ENCODE measurements at regions of chr6 and their contacts with region 1.

Region 1: GRCh38 chr6:16514249-16514648 is 247.0 kb downstream of the ATXN1 start:
- DNase-seq: no peak

Region 2: DNA sequence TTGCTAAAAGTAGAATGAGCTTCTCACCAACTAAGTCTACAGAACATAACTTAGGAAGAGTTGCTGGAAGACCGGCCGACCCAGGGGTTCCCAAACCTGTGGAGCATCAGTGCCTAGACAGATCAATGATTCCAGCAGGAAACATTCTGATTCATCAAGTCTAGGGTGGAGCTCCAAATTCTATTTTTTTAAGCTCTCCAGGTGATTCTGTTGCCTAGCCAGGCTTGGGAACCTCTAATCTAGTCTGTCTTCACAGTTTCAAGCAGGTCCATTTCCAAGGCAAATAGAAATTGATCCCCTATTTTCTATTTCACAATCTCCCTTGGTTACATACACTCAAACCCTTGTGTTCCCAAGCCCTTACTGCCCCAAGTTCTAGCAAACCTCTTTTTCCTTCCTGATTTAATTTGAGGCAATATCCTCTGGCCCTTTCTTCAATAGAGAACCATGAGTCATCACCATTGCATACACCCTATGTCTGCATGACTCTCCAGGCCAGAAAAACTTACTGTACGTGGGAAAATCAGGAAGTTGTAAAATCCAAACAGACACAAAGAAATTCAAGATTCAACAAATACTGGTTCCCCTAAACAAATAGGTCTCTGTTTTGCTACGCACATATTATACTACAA is 238.1 kb after region 1 on chr6:
- intact Hi-C with region 1: no loop called
- DNase-seq: no peak

Region 3: DNA sequence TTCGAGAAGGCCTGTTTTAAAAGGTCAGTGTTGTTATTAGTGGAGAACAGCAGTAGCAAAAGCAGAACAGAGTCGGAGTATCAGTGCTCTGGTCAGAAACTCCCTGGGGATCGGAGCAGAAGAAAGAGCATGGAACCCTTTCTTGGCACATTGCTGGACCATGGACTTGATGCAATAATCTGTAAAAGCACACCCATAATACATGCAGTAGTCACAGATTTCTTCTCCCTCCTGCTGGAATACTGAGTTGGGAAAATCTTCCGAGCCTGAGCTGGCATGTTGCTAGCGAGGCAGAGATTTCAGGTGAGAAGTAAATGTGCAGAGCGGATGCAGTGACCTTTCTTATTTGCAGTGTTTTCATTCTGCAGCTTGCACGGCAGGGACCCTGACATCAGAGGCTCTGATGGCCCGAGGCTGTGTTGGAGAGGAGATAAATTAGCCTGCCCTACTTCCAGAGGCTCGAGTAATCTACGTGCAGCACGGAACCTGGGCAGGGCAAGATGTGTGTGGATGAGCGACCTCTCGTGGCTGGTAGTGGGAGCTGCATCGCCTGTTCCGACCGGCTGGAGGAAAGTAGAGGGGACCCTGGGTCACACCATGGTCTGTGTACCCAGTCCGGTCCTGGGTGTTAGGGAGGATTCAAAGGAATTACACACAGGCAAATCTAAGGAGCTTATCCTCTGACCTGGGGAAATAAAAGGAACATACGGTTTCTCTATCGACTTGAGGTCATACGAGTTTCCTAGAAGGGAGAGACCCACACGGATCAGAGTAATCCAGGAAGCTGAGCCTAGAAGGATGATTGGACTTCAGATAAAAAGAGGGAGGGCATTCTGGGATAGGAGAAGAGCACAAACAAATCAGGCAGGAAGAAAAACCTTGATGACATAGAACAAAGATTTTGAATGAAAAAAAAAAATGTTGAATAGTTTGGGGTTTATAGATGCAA is 450.6 kb after region 1 on chr6:
- intact Hi-C with region 1: loop called (anchors 10 kb)
- DNase-seq: peak; percentile 78

Measured in cardiac septum (tissue), 1 donor.